Dendritic cell treated with granulocyte-macrophage colony-stimulating factor and Interleukin-4, amounts not matched to agents 40 ng/mL and 50 ng/mL, for 4 days (primary cell): ENCODE measurements at regions of chr10 and their contacts with region 1.

Region 1: DNA sequence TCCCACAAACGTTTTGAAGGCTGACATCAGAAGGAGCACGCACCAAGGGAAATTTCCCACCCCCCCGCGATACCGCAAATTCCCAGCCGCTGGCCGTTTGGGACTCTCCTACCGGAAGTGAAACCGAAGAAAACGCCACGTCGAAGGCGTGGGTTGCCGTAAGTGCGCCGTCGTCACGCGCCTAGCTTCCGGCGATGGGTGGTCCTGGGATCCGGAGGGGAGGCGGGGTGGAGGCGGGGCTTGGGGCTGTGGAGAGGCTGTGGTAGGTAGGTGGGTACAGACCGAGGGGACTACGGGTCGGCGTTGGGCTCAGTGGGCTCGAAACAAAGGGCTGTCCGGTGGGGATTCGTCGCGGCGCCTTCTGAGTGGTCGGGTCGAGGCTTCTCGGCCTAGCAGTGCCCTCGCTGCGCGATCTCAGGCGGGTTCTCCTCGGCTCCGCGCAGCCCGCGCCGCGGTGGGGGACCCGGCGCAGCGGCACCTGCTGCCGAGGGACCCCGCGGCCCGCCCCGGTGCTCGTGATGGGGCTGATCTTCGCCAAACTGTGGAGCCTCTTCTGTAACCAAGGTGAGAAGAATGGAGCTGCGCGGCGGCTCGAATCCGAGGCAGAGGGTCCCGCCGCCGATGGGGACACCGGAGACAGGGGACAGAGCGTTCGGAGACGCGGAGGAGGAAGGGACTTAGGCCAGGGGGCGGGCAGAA is at the start of gene ARL5B:
- H3K4me3 Mint-ChIP-seq: peak within 1 kb of the TSS; percentile 82
- H3K27ac Mint-ChIP-seq: peak within 1 kb of the TSS; percentile 81
- H3K4me1 Mint-ChIP-seq: peaks cover 18% of the 10 kb centered on the region
- H3K27me3 Mint-ChIP-seq: no peaks in the 10 kb centered on the region

Region 2: GRCh38 chr10:16817125-16818019 is 1841.9 kb before region 1 on chr10 and contains the start of gene RSU1:
- intact Hi-C with region 1: loop called (anchors 10 kb)
- H3K4me3 Mint-ChIP-seq: peak within 1 kb of the TSS; percentile 84
- H3K27ac Mint-ChIP-seq: peak within 1 kb of the TSS; percentile 83
- H3K4me1 Mint-ChIP-seq: peaks cover 67% of the 10 kb centered on the region
- H3K27me3 Mint-ChIP-seq: no peaks in the 10 kb centered on the region

Region 3: DNA sequence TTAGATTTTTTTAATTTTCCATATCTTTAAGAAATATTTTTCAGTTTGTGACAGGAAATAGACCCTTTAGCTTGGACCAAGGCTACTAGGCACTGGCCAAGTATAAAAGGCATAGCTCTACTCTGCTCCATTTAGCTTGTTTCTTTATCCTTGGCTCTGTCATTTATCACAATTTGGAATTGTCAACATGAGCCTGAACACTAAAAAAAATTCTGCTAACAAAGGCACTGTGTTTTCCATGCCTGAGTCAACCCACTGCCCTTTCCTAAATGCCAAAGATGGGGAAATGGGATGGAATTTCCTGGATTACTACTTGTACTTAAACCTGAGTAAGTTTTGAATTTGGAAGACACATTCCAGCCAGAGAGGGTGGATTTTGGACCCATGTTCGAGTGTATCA is 136.2 kb before region 1 on chr10:
- intact Hi-C with region 1: no loop called
- H3K4me3 Mint-ChIP-seq: no peak overlapping the region
- H3K27ac Mint-ChIP-seq: no peak overlapping the region
- H3K4me1 Mint-ChIP-seq: no peaks in the 10 kb centered on the region
- H3K27me3 Mint-ChIP-seq: no peaks in the 10 kb centered on the region

Region 4: DNA sequence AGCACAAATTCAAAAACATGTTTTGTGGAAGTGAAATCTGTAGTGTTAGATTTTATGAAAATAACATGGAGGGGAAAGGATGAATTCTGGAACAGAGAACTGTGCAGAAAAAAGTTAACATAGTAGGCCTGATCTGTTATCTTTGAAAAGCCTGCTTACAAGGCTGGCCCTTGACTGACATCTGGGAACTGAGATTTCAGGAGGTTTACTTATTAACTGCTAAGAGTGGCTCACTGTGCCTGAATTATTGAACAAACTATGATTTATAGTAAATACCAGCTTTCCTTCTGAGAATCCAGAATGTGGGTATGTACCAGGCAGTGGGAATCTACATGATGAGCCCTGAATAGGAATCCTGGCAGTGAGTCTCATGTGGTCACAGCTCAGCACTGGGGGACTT is 38.4 kb before region 1 on chr10:
- intact Hi-C with region 1: loop called (anchors 5 kb)
- H3K4me3 Mint-ChIP-seq: no peak overlapping the region
- H3K27ac Mint-ChIP-seq: no peak overlapping the region
- H3K4me1 Mint-ChIP-seq: peaks cover 5% of the 10 kb centered on the region
- H3K27me3 Mint-ChIP-seq: no peaks in the 10 kb centered on the region

Region 5: GRCh38 chr10:18868919-18869318 is 209.7 kb after region 1 on chr10:
- intact Hi-C with region 1: no loop called
- H3K4me3 Mint-ChIP-seq: no peak overlapping the region
- H3K27ac Mint-ChIP-seq: no peak overlapping the region
- H3K4me1 Mint-ChIP-seq: no peaks in the 10 kb centered on the region
- H3K27me3 Mint-ChIP-seq: no peaks in the 10 kb centered on the region

Region 6: DNA sequence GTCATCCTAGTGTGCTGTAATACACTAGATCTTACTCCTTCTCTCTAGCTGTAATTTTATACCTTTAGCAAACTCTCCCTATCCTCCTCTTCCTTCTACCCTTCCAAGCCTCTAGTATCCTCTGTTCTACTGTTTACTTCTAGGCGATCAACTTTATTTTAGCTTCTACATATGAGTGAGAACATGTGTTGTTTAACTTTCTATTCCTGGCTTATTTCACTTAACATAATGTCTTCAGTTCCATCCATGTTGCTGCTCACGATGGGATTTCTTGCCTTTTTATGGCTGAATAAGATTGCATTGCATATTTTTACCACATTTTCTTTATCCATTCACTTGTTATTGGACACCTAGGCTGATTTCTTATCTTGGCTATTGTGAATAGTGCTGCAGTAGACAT is 707.9 kb after region 1 on chr10:
- intact Hi-C with region 1: no loop called
- H3K4me3 Mint-ChIP-seq: no peak overlapping the region
- H3K27ac Mint-ChIP-seq: no peak overlapping the region
- H3K4me1 Mint-ChIP-seq: no peaks in the 10 kb centered on the region
- H3K27me3 Mint-ChIP-seq: no peaks in the 10 kb centered on the region